Heart right ventricle (tissue), 16 donors: ENCODE measurements at regions of chr3 and their contacts with region 1.

Region 1: GRCh38 chr3:33209357-33209756 is 9.3 kb downstream of the SUSD5 start:
- DNase-seq: no peak
- ATAC-seq: no peak
- H3K4me3 ChIP-seq: no peak overlapping the region
- H3K27ac ChIP-seq: no peak overlapping the region
- H3K4me1 ChIP-seq: no peaks in the 10 kb centered on the region
- H3K27me3 ChIP-seq: peaks cover 0 to 6% (median 0%) of the 10 kb centered on the region in 7 donors
- CTCF ChIP-seq: no peak

Region 2: DNA sequence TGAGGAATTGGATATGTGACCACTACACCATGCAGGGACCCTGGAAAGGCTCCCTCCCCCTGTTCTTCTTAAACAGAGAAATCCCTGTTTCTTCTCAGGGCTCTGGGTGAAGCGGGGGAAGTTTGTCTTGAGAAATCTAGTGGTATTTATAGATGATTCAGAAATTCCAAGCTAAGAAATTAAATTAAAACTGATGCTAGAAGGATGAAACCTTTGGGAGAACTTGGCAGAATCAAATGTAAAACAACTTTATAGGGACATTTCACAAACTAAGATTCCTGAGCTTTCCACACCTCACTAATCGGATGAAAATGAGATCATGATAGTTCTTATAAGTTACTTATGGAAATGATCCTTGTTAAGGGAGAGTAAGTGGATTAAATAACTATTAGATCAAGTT is 122.1 kb after region 1 on chr3:
- intact Hi-C with region 1: no loop called
- DNase-seq: no peak
- ATAC-seq: no peak
- H3K4me3 ChIP-seq: no peak overlapping the region
- H3K27ac ChIP-seq: no peak overlapping the region
- H3K4me1 ChIP-seq: no peaks in the 10 kb centered on the region
- H3K27me3 ChIP-seq: no peaks in the 10 kb centered on the region
- CTCF ChIP-seq: no peak

Region 3: GRCh38 chr3:33578325-33579177 is 369.2 kb after region 1 on chr3:
- intact Hi-C with region 1: loop called in 1 of 10 experiments (anchors 5 kb)
- DNase-seq: no peak
- ATAC-seq: no peak
- H3K4me3 ChIP-seq: no peak overlapping the region
- H3K27ac ChIP-seq: no peak overlapping the region
- H3K4me1 ChIP-seq: peaks cover 0 to 4% (median 0%) of the 10 kb centered on the region in 9 donors
- H3K27me3 ChIP-seq: no peaks in the 10 kb centered on the region
- CTCF ChIP-seq: no peak